BJ (cell line): ENCODE measurements at regions of chr19 and their contacts with region 1.

Region 1: DNA sequence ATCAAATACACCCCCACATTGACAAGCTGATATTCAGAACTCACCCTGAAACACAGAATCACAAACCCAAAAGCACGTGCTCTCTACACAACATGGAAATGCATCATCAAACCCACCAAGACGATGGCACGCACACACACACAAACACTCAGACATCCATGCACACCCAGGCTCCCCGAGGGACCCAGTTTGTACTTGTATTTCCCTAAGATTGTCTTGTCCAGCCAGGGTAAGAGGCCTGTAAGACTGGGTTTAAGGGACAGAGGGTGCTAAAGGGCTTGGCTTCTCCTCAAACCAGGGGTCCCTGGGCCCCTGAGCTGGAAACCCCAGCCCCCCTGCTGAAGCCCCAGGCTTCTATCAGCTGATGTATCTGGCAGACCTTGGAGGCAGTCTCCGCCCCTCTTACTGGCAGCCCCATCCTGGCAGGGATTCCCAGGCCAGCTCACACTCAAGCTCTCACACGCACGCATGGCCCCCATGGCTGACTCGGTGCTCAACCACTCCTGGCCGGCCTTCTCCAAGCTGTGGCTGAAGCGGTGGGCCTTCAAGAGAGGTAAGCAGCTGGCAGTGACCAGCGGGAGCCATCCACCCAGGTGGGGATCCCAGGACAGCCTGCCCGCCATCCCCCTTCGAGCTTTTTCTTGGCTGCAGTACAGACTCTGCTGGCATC is 6.5 kb downstream of the ARHGEF18 start:
- DNase-seq: no peak
- H3K4me3 ChIP-seq: no peak overlapping the region
- H3K27me3 ChIP-seq: no peaks in the 10 kb centered on the region
- CTCF ChIP-seq: no peak

Region 2: DNA sequence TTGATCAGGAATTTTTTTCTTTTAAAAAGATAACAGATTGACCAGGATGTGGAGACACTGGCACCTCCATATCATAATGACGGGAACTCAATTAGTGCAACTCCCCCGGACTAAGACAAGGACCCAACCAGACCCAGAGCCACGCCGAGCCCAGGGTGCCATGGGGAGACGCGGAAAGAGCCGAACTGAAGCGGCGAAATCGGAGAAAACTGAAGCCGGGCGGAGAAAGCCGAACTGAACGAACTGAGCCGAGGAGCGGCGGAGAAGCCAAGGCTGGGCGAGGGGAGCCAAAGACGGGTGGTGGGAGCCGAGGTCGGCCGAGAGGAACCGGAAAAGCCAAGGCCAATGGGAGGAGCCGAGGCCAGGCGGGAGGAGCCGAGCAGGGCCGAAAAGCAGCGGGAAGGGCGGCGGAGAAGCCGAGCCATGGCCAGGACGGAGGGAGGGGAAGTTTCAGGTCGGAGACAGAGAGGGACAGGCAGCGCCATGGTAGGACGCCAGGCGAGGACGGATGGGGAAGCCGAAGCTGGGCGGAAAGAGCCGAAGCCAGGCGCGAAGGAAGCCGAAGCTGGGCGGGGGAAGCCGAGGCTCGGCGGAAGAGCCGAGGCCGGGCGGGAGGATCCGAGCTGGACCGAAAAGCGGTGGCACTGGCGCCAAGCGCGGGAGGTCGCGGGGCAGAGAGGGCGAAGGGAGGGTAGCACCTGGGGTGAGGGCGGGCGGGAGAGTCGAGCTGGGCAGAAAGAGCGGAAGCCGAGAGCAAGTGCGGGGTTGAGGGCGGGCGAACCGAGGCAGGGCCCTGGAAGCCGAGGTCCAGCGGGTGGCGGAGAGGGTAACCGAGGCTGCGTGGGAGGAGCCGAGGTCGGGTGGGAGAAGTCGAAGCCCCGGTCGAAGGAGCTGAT is 256.3 kb before region 1 on chr19:
- CTCF ChIA-PET with region 1: interaction called, 10 read pairs
- POLR2A ChIA-PET with region 1: no interaction called
- DNase-seq: peak; percentile 63
- H3K4me3 ChIP-seq: peak overlapping the region; percentile 91
- H3K27me3 ChIP-seq: no peaks in the 10 kb centered on the region
- CTCF ChIP-seq: no peak

Region 3: GRCh38 chr19:7366701-7367420 is 11.6 kb after region 1 on chr19:
- CTCF ChIA-PET with region 1: interaction called, 15 read pairs
- POLR2A ChIA-PET with region 1: no interaction called
- DNase-seq: no peak
- H3K4me3 ChIP-seq: no peak overlapping the region
- H3K27me3 ChIP-seq: peaks cover 2% of the 10 kb centered on the region; the same call in 1 of the 2 replicates
- CTCF ChIP-seq: peak; percentile 18; the same call in 1 of the 2 replicates

Region 4: DNA sequence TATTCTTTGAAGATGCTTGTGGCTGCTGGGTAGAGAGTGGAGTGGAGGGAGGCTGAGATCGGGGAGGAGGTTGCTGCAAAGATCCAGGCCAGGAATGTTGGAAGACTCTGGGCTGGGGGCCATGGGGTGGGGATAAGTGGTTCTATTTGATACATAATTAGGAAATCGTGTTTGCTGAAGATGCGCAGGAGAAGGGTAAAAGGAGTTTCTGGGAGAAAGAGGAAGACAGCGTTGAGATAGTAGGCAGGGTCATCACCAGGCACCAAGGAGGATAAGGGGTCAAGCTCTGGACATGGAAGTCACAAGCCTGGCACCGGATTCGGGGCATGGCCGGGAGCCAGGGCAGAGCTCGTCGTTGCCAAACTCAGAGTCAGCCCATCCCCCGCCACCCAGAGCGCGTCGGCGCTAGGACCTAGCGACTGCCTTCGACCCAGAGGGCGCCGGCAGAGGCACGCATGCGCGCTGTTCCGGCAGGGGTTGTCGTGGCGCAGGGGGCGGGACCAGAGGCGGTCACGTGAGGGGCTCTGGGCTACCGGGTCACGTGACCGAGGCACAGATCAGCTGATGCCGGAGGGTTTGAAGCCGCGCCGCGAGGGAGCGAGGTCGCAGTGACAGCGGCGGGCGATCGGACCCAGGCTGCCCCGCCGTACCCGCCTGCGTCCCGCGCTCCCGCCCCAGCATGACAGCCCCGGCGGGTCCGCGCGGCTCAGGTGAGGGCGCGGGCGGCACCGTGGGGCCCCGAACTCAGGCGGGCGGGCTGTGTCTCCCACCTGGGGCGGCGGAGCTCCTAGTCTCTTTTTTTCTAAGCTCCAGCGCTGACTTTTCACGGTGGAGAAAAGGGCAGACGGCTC is 167.0 kb after region 1 on chr19 and contains the start of gene MCOLN1:
- CTCF ChIA-PET with region 1: interaction called, 10 read pairs
- POLR2A ChIA-PET with region 1: no interaction called
- DNase-seq: peak; percentile 61
- H3K4me3 ChIP-seq: peak within 1 kb of the TSS; percentile 70
- H3K27me3 ChIP-seq: no peaks in the 10 kb centered on the region
- CTCF ChIP-seq: no peak
- polyA plus RNA-seq, gene MCOLN1: 24.6 and 50.6 TPM in 2 replicates

Region 5: DNA sequence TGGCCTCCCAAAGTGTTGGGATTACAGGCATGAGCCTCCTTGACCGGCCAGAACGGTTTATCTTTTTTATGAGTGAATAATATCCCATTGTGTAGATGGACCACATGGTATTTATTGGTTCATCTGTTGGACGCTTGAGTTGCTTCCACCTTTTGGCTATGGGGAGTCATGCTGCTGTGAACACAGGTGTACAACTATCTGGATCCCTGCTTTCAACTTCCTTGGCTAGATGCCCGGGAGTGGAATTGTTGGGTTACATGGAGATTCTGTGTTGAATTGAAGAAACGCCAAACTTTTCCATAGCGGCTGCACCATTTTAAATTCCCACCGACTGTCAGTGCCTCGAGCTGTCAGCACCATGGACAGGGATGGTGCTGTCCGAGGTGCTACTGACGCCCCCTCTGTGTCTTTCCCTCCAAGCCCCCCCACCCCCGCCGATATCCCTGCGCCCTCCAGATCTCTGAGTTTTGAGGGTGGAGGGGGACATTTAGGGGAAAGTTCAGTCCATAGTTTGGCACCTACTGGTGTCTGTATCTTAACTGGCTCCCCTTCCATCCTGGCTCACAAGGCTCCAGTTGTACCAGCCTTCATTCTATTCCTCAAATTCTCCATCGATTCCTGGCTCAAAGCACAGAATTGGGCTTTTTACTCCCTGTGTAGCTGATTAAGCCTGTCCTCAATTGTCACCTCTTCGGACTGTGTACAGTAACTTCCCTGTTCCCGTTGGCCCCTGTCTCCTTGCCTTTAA is 207.5 kb after region 1 on chr19:
- CTCF ChIA-PET with region 1: interaction called, 12 read pairs
- POLR2A ChIA-PET with region 1: no interaction called
- DNase-seq: no peak
- H3K4me3 ChIP-seq: no peak overlapping the region
- H3K27me3 ChIP-seq: no peaks in the 10 kb centered on the region
- CTCF ChIP-seq: no peak

Region 6: DNA sequence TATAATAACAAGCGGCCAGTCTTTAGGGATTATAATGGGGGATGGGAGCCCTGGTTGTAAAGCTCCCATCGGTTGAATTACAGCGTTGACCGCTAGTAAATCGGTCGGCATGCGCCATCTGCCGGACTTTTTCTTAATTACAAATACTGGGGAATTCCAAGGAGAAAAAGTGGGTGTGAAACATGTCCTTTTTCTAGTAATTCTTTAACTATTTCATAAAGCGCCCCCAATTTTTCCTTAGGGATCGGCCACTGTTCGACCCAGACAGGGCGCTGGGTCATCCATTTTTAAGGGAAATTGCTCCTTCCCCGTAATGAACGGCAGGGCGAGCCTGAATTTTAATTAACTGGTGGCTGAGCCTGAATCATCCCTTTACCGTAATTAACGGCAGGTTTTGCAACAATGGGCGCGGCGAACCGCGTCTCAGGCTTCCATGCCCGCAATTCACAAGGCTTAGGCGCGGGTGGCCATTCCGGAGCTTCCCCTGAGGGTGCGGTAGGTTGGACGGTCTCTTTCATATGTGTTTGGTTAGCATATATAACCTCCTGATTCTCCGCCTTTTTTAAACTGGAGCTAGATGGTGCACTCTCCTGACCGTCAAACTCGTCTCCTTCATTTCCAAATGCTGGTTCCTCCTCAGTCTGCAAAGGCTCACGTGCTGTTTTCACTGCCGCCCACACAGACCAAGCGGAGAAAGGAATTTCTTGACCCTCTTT is 444.5 kb after region 1 on chr19:
- CTCF ChIA-PET with region 1: interaction called, 26 read pairs
- POLR2A ChIA-PET with region 1: no interaction called
- DNase-seq: no peak
- H3K4me3 ChIP-seq: no peak overlapping the region; the same call in 1 of the 2 replicates
- H3K27me3 ChIP-seq: peaks cover 5% of the 10 kb centered on the region
- CTCF ChIP-seq: peak; percentile 57